Stomach (tissue), 19 donors: ENCODE measurements at regions of chr20 and their contacts with region 1.

Region 1: GRCh38 chr20:44210422-44211176 is at the start of gene OSER1:
- DNase-seq: peak; percentile 98 to 99
- H3K4me3 ChIP-seq: peak within 1 kb of the TSS; percentile 85 to 99 (median 92)
- H3K27ac ChIP-seq: peak within 1 kb of the TSS; percentile 96 to 99 (median 97)
- H3K4me1 ChIP-seq: peaks cover 27 to 70% (median 54%) of the 10 kb centered on the region in 4 donors
- H3K27me3 ChIP-seq: no peaks in the 10 kb centered on the region
- CTCF ChIP-seq: no peak
- EP300 ChIP-seq: peak; percentile 37
- POLR2A ChIP-seq: peak in 2 of 4 donors; percentile 89 to 93
- total RNA-seq, gene OSER1: 7.8 to 87.5 (median 31.9) TPM

Region 2: DNA sequence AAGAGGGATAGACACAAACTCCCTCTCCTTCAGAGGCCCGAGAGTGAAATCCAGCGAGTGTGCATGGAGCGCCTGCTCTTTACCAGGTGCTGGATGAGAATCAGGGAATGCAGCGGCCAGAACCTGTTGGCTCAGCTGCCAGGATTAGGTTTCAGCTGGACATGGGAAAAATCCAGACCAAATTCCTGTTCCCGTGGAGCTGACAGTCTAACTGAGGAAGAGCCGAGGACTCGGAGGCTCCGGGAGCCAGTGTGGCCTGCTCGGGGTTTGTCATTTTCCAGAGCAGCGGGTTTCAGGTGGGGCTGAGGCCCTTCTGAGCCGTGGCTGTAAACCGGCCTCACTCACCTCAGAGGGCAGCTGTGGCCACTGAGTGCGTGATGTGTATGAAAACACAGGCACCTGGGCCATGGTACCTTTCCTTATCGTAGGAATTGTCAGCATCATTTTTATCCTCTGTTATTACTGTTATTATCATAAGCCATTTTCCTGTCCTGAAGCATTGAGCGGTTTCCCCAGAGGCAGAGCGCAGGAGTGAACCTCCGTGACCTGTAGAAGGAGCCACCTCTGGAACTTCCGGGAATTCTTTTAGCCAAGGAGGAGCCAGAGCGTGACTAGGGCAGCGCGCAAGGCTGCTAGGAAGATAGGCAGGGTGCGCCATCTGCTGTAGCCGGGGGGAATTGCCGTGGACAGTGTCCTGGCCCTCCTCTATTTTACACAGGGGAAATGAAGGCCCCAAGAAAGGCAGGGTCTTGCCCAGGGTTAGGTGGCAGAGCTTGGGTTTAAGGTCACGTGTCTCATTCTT is 399.1 kb after region 1 on chr20:
- intact Hi-C with region 1: loop called (anchors 10 kb)
- DNase-seq: peak; percentile 91 to 95
- H3K4me3 ChIP-seq: peak overlapping the region; percentile 13 to 33 (median 16)
- H3K27ac ChIP-seq: peak overlapping the region; percentile 47 to 87 (median 83)
- H3K4me1 ChIP-seq: peaks cover 18 to 45% (median 31%) of the 10 kb centered on the region in 4 donors
- H3K27me3 ChIP-seq: no peaks in the 10 kb centered on the region
- CTCF ChIP-seq: peak in 5 of 7 experiments; percentile 96 to 98 (median 97)
- EP300 ChIP-seq: no peak
- POLR2A ChIP-seq: no peak